HepG2 (cell line): ENCODE measurements at regions of chr9 and their contacts with region 1.

Region 1: GRCh38 chr9:36798350-36799065 is 225.8 kb downstream of the MELK start:
- DNase-seq: peak; percentile 24
- ATAC-seq: peak; percentile 92
- H3K4me3 ChIP-seq: no peak overlapping the region
- H3K27ac ChIP-seq: no peak overlapping the region
- H3K4me1 ChIP-seq: peaks cover 10% of the 10 kb centered on the region
- H3K27me3 ChIP-seq: peaks cover 0 to 20% of the 10 kb centered on the region in 2 experiments; a peak in 4 of 5 replicates
- CTCF ChIP-seq: peak; percentile 79
- EP300 ChIP-seq: no peak
- POLR2A ChIP-seq: no peak
- RAD21 ChIP-seq: peak; percentile 44; the same call in 1 of the 2 replicates

Region 2: GRCh38 chr9:36855448-36856315 is 57.2 kb after region 1 on chr9:
- CTCF ChIA-PET with region 1: interaction called, 5 read pairs
- POLR2A ChIA-PET with region 1: no interaction called
- in situ Hi-C with region 1: loop called (anchors 5 kb)
- intact Hi-C with region 1: loop called (anchors 1 kb)
- DNase-seq: peak; percentile 41
- ATAC-seq: peak; percentile 95
- H3K4me3 ChIP-seq: no peak overlapping the region
- H3K27ac ChIP-seq: no peak overlapping the region
- H3K4me1 ChIP-seq: peaks cover 23% of the 10 kb centered on the region
- H3K27me3 ChIP-seq: peaks cover 1 to 27% of the 10 kb centered on the region in 2 experiments; a peak in 4 of 5 replicates
- CTCF ChIP-seq: peak; percentile 77
- EP300 ChIP-seq: no peak
- POLR2A ChIP-seq: no peak
- RAD21 ChIP-seq: 0 out of 2 replicates have a peak, but pooled peaks have one; percentile 51